ENCODE measurements at regions of chr21 and their contacts with region 1.

Region 1: DNA sequence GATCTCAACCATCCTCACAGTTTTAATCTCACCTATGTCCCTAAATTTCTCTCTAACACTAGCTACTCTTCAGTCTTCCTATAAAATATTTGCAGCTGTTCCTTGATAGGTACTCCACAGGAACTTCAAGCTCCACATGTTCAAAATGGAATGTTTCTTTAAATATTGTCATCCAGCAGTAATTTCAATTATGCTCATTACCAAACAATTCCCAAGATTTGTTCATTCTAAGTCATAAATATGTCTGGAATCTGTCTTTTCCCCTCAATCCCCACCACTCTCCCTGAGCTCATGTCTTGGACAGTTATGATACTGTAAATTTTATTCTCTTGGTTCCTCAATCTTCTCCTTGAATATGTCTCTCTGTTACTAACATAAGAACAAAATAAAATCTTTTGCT is 214.4 kb downstream of the NRIP1 start:
- DNase-seq: no peak
- ATAC-seq: no peak
- H3K4me3 ChIP-seq: no peak overlapping the region
- H3K27ac ChIP-seq: no peak overlapping the region
- H3K4me1 ChIP-seq: no peaks in the 10 kb centered on the region
- H3K27me3 ChIP-seq: no peaks in the 10 kb centered on the region
- CTCF ChIP-seq: no peak

Region 2: GRCh38 chr21:14438211-14438610 is 412.2 kb before region 1 on chr21:
- CTCF ChIA-PET with region 1: no interaction called
- POLR2A ChIA-PET with region 1: no interaction called
- intact Hi-C with region 1: loop called (anchors 10 kb)
- DNase-seq: no peak
- ATAC-seq: no peak
- H3K4me3 ChIP-seq: no peak overlapping the region
- H3K27ac ChIP-seq: no peak overlapping the region
- H3K4me1 ChIP-seq: no peaks in the 10 kb centered on the region
- H3K27me3 ChIP-seq: no peaks in the 10 kb centered on the region
- CTCF ChIP-seq: no peak

Measured in PC-3 (cell line).